Naive thymus-derived CD8-positive, alpha-beta T cell (primary cell): ENCODE measurements at regions of chr15 and their contacts with region 1.

Region 1: GRCh38 chr15:67839929-67840748 is at the start of gene RNU6-1:
- DNase-seq: peak; percentile 91 to 99 (median 96)
- ATAC-seq: peak; percentile 82 to 85
- H3K4me3 Mint-ChIP-seq: peak within 1 kb of the TSS; percentile 91 to 97 (median 96)
- H3K27ac Mint-ChIP-seq: peak within 1 kb of the TSS; percentile 96 to 100 (median 98)
- H3K4me1 Mint-ChIP-seq: peaks cover 17 to 44% (median 38%) of the 10 kb centered on the region in 4 donors
- H3K27me3 Mint-ChIP-seq: peaks cover 4 to 15% (median 7%) of the 10 kb centered on the region in 5 donors
- polyA plus RNA-seq, gene RNU6-1: not detected

Region 2: GRCh38 chr15:67542420-67543347 is 297.5 kb before region 1 on chr15 and contains the start of gene MAP2K5:
- POLR2A ChIA-PET with region 1: interaction called, 12 read pairs
- DNase-seq: peak; percentile 63 to 88 (median 77)
- ATAC-seq: peak; percentile 68 to 83
- H3K4me3 Mint-ChIP-seq: peak within 1 kb of the TSS; percentile 91 to 98 (median 96)
- H3K27ac Mint-ChIP-seq: peak within 1 kb of the TSS; percentile 98 to 99 (median 98)
- H3K4me1 Mint-ChIP-seq: peaks cover 19 to 68% (median 52%) of the 10 kb centered on the region in 4 donors
- H3K27me3 Mint-ChIP-seq: no peaks in the 10 kb centered on the region
- polyA plus RNA-seq, gene MAP2K5: 17.8 to 22.5 (median 21.2) TPM

Region 3: DNA sequence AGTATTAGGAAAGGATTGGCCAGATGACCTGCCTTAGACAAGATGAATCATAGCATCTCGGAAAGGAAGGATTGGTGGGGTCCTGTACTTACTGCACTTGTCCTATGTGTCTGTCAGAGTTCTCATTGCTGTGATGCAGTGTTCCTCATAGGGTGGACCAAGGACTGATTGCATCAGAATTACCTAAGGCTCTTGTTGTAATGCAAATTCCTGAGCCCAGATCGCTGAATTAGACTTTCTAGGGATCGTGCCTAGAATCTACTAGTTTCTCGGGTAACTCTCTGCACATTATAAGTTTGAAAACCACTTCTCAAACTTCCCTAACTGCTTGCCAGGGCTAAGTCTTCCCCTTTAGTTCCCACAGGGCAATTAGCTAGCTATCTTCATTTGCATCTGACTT is 89.8 kb before region 1 on chr15:
- POLR2A ChIA-PET with region 1: no interaction called
- DNase-seq: no peak
- ATAC-seq: no peak
- H3K4me3 Mint-ChIP-seq: peak overlapping the region in 4 of 10 donors; percentile 30 to 69 (median 45)
- H3K27ac Mint-ChIP-seq: peak overlapping the region in 5 of 10 donors; percentile 11 to 78 (median 51)
- H3K4me1 Mint-ChIP-seq: peaks cover 29 to 65% (median 53%) of the 10 kb centered on the region in 4 donors
- H3K27me3 Mint-ChIP-seq: no peaks in the 10 kb centered on the region

Region 4: DNA sequence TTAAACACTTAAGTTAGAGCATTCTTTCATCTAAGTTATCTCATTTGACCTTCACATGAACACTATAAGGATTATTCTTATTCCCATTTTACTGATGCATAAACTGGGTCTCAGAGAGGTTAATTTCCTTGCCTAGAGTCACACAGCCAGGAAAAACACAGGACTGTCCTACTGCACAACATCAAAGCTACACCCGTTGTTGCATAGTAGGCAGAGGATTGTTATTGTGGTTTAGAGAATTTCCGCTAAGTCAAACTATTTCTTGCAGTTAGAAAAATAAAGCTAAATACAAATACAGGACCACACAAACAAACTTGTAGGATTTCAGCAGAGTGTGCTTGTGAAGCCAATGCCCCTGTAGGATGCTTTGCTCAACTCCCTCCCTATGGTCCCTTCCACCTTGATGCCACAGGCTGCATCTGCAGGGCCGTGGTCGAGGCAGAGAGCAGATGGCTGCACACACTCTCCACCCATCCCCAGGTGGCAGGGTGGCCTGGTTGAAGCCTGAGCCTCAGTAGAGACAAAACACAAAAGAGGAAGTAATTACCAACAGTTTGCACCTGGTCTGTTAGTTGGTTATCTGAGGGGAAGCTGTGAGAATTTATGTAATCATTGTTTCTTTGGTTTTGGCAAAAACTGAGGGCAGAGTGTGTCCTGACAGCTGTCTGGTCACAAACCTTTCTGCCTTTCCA is 55.9 kb before region 1 on chr15:
- POLR2A ChIA-PET with region 1: interaction called, 20 read pairs
- DNase-seq: peak in 3 of 10 donors; percentile 6 to 38 (median 11)
- ATAC-seq: peak; percentile 15 to 59
- H3K4me3 Mint-ChIP-seq: peak overlapping the region in 9 of 10 donors; percentile 5 to 75 (median 46)
- H3K27ac Mint-ChIP-seq: peak overlapping the region; percentile 44 to 86 (median 80)
- H3K4me1 Mint-ChIP-seq: peaks cover 28 to 58% (median 35%) of the 10 kb centered on the region in 4 donors
- H3K27me3 Mint-ChIP-seq: no peaks in the 10 kb centered on the region

Region 5: GRCh38 chr15:68053701-68054627 is 213.8 kb after region 1 on chr15 and contains the start of gene PIAS1:
- POLR2A ChIA-PET with region 1: interaction called, 10 read pairs
- DNase-seq: peak; percentile 85 to 97 (median 92)
- ATAC-seq: peak; percentile 85 to 88
- H3K4me3 Mint-ChIP-seq: peak within 1 kb of the TSS; percentile 88 to 99 (median 95)
- H3K27ac Mint-ChIP-seq: peak within 1 kb of the TSS; percentile 85 to 98 (median 96)
- H3K4me1 Mint-ChIP-seq: peaks cover 14 to 44% (median 39%) of the 10 kb centered on the region in 4 donors
- H3K27me3 Mint-ChIP-seq: peaks cover 0 to 9% (median 2%) of the 10 kb centered on the region in 5 donors
- polyA plus RNA-seq, gene PIAS1: 120 to 149 (median 138) TPM